A549 (cell line): ENCODE measurements at regions of chr19 and their contacts with region 1.

Region 1: DNA sequence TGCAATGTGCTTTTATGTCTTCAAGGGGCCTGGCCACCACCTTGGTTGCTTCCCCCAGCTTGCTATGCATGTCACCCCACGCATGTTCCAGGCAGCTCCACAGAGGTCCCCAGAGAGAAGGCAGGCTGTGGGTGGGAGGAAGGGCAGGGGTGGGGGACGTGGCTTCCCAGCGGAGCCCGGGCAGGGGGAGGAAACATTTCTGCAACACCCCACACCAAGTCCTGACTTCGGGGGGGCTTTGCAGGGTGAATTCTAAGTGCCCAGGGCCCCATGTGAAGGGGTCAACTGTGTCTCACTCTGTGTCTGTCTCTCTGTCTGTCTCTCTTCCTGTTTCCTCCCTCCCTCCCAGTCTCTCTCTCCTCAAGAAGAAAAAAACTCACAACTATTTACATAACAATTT is 39.6 kb downstream of the LTBP4 start:
- DNase-seq: peak in 1 of 2 experiments; percentile 70
- ATAC-seq: peak; percentile 53 to 64
- H3K4me3 ChIP-seq: no peak overlapping the region
- H3K27ac ChIP-seq: peak overlapping the region; percentile 72 to 84
- H3K4me1 ChIP-seq: peaks cover 34% of the 10 kb centered on the region
- CTCF ChIP-seq: no peak
- EP300 ChIP-seq: no peak
- POLR2A ChIP-seq: no peak
- RAD21 ChIP-seq: no peak

Region 2: GRCh38 chr19:40489882-40490230 is 150.9 kb before region 1 on chr19:
- CTCF ChIA-PET with region 1: interaction called, 12 read pairs
- POLR2A ChIA-PET with region 1: interaction called, 4 read pairs
- DNase-seq: no peak
- ATAC-seq: peak in 1 of 2 experiments; percentile 2; a peak in 1 of 6 replicates
- H3K4me3 ChIP-seq: no peak overlapping the region
- H3K27ac ChIP-seq: no peak overlapping the region
- H3K4me1 ChIP-seq: 0 out of 3 replicates have a peak, but pooled peaks cover 6% of the 10 kb centered on the region
- CTCF ChIP-seq: no peak
- EP300 ChIP-seq: no peak
- POLR2A ChIP-seq: no peak
- RAD21 ChIP-seq: no peak

Region 3: GRCh38 chr19:40555978-40556689 is 84.6 kb before region 1 on chr19:
- CTCF ChIA-PET with region 1: interaction called, 106 read pairs
- POLR2A ChIA-PET with region 1: no interaction called
- DNase-seq: no peak
- ATAC-seq: peak; percentile 3 to 35; a peak in 3 of 6 replicates
- H3K4me3 ChIP-seq: no peak overlapping the region
- H3K27ac ChIP-seq: no peak overlapping the region
- H3K4me1 ChIP-seq: no peaks in the 10 kb centered on the region
- CTCF ChIP-seq: no peak
- EP300 ChIP-seq: no peak
- POLR2A ChIP-seq: no peak
- RAD21 ChIP-seq: no peak

Region 4: GRCh38 chr19:40570313-40571004 is 70.3 kb before region 1 on chr19:
- CTCF ChIA-PET with region 1: interaction called, 53 read pairs
- POLR2A ChIA-PET with region 1: interaction called, 5 read pairs
- DNase-seq: peak; percentile 100
- ATAC-seq: peak; percentile 80 to 91
- H3K4me3 ChIP-seq: peak overlapping the region; percentile 56
- H3K27ac ChIP-seq: peak overlapping the region; percentile 84 to 89
- H3K4me1 ChIP-seq: peaks cover 17% of the 10 kb centered on the region
- CTCF ChIP-seq: peak; percentile 59
- EP300 ChIP-seq: no peak
- POLR2A ChIP-seq: peak; percentile 78
- RAD21 ChIP-seq: peak; percentile 55 to 59

Region 5: GRCh38 chr19:40603389-40604135 is 37.2 kb before region 1 on chr19:
- CTCF ChIA-PET with region 1: interaction called, 409 read pairs
- POLR2A ChIA-PET with region 1: interaction called, 7 read pairs
- DNase-seq: peak; percentile 99 to 100
- ATAC-seq: peak; percentile 41 to 80
- H3K4me3 ChIP-seq: peak overlapping the region; percentile 36
- H3K27ac ChIP-seq: peak overlapping the region; percentile 55 to 85
- H3K4me1 ChIP-seq: peaks cover 58% of the 10 kb centered on the region
- CTCF ChIP-seq: peak; percentile 20; the same call in 1 of the 3 replicates
- EP300 ChIP-seq: no peak
- POLR2A ChIP-seq: peak; percentile 20; the same call in 1 of the 2 replicates
- RAD21 ChIP-seq: no peak; a peak in 1 of 5 replicates

Region 6: GRCh38 chr19:40702337-40703012 is 61.7 kb after region 1 on chr19:
- CTCF ChIA-PET with region 1: interaction called, 11 read pairs
- POLR2A ChIA-PET with region 1: no interaction called
- DNase-seq: peak; percentile 82 to 84
- ATAC-seq: peak; percentile 88 to 96
- H3K4me3 ChIP-seq: no peak overlapping the region
- H3K27ac ChIP-seq: peak overlapping the region in 1 of 2 experiments; percentile 44; a peak in 3 of 6 replicates
- H3K4me1 ChIP-seq: peaks cover 8% of the 10 kb centered on the region; the same call in 2 of the 3 replicates
- CTCF ChIP-seq: peak; percentile 69
- EP300 ChIP-seq: no peak
- POLR2A ChIP-seq: no peak
- RAD21 ChIP-seq: peak; percentile 71 to 83

Region 7: GRCh38 chr19:40872209-40872608 is 231.5 kb after region 1 on chr19:
- CTCF ChIA-PET with region 1: no interaction called
- POLR2A ChIA-PET with region 1: no interaction called
- DNase-seq: no peak
- ATAC-seq: no peak
- H3K4me3 ChIP-seq: no peak overlapping the region
- H3K27ac ChIP-seq: no peak overlapping the region
- H3K4me1 ChIP-seq: peaks cover 9% of the 10 kb centered on the region; the same call in 2 of the 3 replicates
- CTCF ChIP-seq: no peak
- EP300 ChIP-seq: no peak
- POLR2A ChIP-seq: no peak
- RAD21 ChIP-seq: no peak